Mammary epithelial cell (primary cell): ENCODE measurements at regions of chr16 and their contacts with region 1.

Region 1: DNA sequence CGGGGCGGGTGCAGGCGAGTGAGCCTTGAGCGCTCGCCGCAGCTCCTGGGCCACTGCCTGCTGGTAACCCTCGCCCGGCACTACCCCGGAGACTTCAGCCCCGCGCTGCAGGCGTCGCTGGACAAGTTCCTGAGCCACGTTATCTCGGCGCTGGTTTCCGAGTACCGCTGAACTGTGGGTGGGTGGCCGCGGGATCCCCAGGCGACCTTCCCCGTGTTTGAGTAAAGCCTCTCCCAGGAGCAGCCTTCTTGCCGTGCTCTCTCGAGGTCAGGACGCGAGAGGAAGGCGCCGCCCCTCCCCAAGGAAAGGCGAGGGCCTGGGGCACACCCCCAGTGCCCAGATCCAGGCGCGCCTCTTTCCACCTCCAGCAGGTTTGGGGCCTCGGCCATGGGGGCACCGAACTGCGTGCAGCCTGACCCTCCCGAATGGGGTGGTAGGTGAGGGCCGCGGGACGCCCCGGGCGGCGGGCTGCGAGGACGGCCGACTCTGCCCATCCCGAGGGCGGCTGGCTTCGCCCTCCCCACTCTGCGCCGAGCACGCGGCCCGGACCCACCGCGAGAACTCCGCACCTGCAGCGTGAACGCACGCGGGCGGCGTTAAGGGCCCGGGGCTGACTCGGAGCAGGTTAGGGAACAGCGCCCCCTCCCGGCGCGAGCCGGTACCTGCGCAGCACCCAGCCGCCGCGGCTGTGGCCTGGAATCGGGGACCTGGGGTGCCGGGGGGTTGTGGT is 844 bp downstream of the HBQ1 start:
- DNase-seq: peak; percentile 57
- H3K4me3 ChIP-seq: peak overlapping the region in 2 of 3 experiments; percentile 20 to 33
- H3K27ac ChIP-seq: no peak overlapping the region
- H3K4me1 ChIP-seq: peaks cover 9% of the 10 kb centered on the region
- H3K27me3 ChIP-seq: peaks cover 7% of the 10 kb centered on the region
- CTCF ChIP-seq: peak; percentile 82 to 95

Region 2: GRCh38 chr16:106623-107324 is 74.3 kb before region 1 on chr16:
- CTCF ChIA-PET with region 1: no interaction called
- dilution Hi-C with region 1: no loop called
- in situ Hi-C with region 1: no loop called
- intact Hi-C with region 1: loop called (anchors 1 kb)
- DNase-seq: peak; percentile 53
- H3K4me3 ChIP-seq: no peak overlapping the region
- H3K27ac ChIP-seq: no peak overlapping the region
- H3K4me1 ChIP-seq: peaks cover 12% of the 10 kb centered on the region
- H3K27me3 ChIP-seq: no peaks in the 10 kb centered on the region
- CTCF ChIP-seq: peak; percentile 74 to 81

Region 3: DNA sequence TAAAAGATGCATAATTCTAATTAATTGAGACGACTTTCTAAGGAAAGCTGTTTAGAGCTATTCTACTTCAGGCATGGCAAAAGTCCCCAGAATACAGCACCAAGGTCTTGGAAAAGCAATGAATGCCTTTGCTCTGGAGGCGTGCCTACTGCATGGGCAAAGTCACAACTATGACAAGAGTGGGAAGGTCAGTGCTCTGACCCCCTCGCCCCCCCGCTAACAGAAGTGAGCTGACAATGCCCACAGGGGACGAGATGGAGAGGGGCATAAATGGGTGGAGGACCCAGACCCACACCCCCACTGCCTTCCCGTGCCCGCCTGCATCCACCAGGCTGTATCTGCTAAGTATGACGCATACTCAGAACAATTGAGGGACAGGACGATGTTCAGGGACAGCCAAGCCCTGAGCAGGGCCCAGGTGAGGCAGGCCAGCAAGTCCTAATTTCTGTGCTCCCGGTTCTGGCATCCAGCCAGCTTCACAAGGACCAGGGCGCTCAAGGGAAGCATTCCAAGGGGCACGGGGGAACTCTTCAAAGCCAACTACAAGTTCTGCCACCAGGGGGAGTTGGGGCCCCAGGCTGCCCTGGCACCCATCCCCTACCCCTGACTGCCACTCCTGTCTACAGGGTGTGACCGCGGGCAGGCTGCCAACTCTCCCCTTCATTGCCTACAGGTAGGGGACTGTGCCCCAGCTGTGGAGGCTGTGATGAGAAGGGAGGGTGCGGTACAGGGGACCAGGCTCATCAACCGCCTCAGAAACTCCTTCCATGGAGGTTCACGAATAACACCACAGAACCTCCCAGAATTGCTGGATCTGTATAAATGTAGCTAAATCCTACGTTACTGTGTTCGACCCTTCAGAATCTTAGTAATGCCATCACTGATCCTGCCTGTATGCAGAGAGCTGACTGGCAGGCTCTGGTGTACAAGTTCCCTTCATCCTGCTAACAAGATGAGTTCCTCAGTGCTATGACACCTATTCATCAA is 63.4 kb before region 1 on chr16:
- CTCF ChIA-PET with region 1: no interaction called
- dilution Hi-C with region 1: no loop called
- in situ Hi-C with region 1: no loop called
- intact Hi-C with region 1: loop called (anchors 1 kb)
- DNase-seq: no peak
- H3K4me3 ChIP-seq: no peak overlapping the region
- H3K27ac ChIP-seq: no peak overlapping the region
- H3K4me1 ChIP-seq: peaks cover 11% of the 10 kb centered on the region
- H3K27me3 ChIP-seq: no peaks in the 10 kb centered on the region
- CTCF ChIP-seq: peak; percentile 56 to 77

Region 4: DNA sequence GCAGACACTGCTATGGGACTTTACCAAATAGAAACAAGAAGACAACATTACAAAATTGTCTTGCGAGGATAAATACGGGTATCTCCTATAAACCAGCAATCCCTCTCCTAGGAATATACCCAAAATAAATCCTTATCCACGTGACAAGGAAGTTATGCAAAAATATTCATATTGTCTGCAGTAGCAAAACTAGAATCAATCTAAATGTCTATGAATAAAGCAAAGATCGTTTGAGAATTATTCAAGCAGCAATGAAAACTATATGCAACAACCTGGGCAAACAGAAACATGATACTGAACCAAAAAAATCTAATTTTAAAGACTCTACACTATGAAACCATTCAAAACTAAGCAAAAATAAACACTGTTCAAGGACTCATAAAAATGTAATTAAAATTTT is 38.9 kb after region 1 on chr16:
- CTCF ChIA-PET with region 1: no interaction called
- dilution Hi-C with region 1: no loop called
- in situ Hi-C with region 1: no loop called
- intact Hi-C with region 1: no loop called
- DNase-seq: no peak
- H3K4me3 ChIP-seq: no peak overlapping the region
- H3K27ac ChIP-seq: no peak overlapping the region
- H3K4me1 ChIP-seq: no peaks in the 10 kb centered on the region
- H3K27me3 ChIP-seq: no peaks in the 10 kb centered on the region
- CTCF ChIP-seq: no peak